ENCODE measurements at regions of chr19 and their contacts with region 1.

Region 1: GRCh38 chr19:48954595-48955310 is at the start of gene BAX:
- DNase-seq: peak; percentile 99
- H3K4me3 ChIP-seq: peak within 1 kb of the TSS; percentile 68 to 85 (median 82)
- H3K27ac ChIP-seq: peak within 1 kb of the TSS; percentile 83 to 90 (median 85)
- H3K4me1 ChIP-seq: peaks cover 0 to 18% (median 15%) of the 10 kb centered on the region in 4 donors
- H3K27me3 ChIP-seq: no peaks in the 10 kb centered on the region
- CTCF ChIP-seq: no peak
- EP300 ChIP-seq: peak in 1 of 4 donors; percentile 81
- POLR2A ChIP-seq: peak in 1 of 2 donors; percentile 21
- total RNA-seq, gene BAX: 17.9 to 61.5 (median 30.9) TPM

Region 2: DNA sequence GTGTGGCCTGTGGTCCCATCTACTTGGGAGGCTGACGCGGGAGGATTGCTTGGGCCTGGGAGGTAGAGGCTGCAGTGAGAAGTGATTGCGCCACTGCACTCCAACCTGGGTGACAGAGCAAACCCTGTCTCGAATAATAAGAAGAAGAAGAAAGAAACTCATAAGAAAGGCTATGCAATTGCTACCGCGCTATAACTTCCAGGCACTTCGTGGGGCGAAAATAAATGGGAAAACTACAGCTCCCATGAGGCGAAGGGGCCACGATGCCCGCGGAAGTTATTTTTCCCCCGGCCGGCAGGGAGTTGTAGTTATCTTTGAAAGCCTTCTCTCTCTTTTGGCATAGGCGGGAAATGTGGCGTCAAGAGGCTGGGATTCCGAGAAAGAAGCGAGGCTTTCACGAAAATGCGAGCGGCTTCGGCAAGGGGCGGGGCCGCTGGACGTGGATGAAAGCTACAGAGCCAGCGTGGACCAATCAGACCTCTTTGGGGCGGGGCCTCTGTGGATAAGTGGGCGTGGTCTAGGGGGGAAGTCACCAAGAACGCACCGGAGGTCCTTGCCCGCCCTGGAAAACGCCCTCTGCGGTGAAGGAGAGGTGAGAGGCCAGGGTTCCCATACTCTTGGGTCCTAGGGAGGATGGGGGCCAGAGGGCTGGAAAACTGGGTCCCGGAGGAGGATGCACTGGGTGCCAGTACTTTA is 54.8 kb before region 1 on chr19 and contains the start of gene NUCB1:
- intact Hi-C with region 1: loop called (anchors 5 kb)
- DNase-seq: peak; percentile 100
- H3K4me3 ChIP-seq: peak within 1 kb of the TSS; percentile 73 to 92 (median 84)
- H3K27ac ChIP-seq: peak within 1 kb of the TSS; percentile 88 to 91 (median 89)
- H3K4me1 ChIP-seq: peaks cover 0 to 49% (median 44%) of the 10 kb centered on the region in 4 donors
- H3K27me3 ChIP-seq: no peaks in the 10 kb centered on the region
- CTCF ChIP-seq: peak in 1 of 4 experiments; percentile 30
- EP300 ChIP-seq: peak in 2 of 4 donors; percentile 60 to 87
- POLR2A ChIP-seq: peak; percentile 37 to 66
- total RNA-seq, gene NUCB1: 153 to 275 (median 176) TPM

Region 3: DNA sequence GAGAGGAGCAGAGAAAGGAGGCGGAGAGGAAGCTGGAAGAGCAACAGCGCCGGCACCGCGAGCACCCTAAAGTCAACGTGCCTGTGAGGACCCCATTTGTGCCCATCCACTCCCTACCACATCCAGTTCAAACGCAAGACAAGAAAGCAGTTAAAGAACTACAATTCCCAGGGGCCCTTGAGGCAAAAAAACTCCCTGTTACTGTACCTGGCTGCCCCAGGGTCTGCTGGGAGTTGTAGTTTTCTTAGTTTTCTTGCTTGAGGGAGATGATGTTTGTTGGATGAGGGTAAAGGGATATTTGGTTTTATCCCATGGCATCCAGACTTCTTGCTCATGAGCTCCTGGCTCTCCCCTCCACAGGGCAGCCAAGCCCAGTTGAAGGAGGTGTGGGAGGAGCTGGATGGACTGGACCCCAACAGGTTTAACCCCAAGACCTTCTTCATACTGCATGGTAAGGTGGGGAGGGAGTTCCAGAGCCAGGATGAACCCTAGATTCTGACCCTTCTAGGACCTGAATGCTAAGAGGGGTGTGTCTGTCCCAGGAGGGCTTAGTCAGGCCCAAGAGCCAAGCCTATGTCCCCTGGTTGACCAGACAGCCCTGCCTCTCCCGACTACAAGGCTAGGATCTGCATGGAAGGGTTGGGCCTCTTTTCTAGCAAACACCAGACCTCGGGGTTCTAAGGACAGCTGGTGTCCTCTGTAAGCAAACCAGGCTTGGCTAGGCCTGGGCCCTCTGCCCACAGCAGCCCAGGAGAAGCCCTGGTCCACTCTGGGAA is 41.5 kb before region 1 on chr19:
- intact Hi-C with region 1: loop called (anchors 5 kb)
- DNase-seq: no peak
- H3K4me3 ChIP-seq: no peak overlapping the region
- H3K27ac ChIP-seq: no peak overlapping the region
- H3K4me1 ChIP-seq: no peaks in the 10 kb centered on the region
- H3K27me3 ChIP-seq: no peaks in the 10 kb centered on the region
- CTCF ChIP-seq: no peak
- EP300 ChIP-seq: no peak
- POLR2A ChIP-seq: no peak

Region 4: GRCh38 chr19:48926909-48927308 is 27.8 kb before region 1 on chr19:
- intact Hi-C with region 1: no loop called
- DNase-seq: peak; percentile 82
- H3K4me3 ChIP-seq: no peak overlapping the region
- H3K27ac ChIP-seq: peak overlapping the region in 2 of 4 donors; percentile 11 to 49
- H3K4me1 ChIP-seq: peaks cover 0 to 11% (median 3%) of the 10 kb centered on the region in 4 donors
- H3K27me3 ChIP-seq: peaks cover 0 to 3% (median 0%) of the 10 kb centered on the region in 3 donors
- CTCF ChIP-seq: no peak
- EP300 ChIP-seq: peak in 1 of 4 donors; percentile 42
- POLR2A ChIP-seq: no peak

Region 5: DNA sequence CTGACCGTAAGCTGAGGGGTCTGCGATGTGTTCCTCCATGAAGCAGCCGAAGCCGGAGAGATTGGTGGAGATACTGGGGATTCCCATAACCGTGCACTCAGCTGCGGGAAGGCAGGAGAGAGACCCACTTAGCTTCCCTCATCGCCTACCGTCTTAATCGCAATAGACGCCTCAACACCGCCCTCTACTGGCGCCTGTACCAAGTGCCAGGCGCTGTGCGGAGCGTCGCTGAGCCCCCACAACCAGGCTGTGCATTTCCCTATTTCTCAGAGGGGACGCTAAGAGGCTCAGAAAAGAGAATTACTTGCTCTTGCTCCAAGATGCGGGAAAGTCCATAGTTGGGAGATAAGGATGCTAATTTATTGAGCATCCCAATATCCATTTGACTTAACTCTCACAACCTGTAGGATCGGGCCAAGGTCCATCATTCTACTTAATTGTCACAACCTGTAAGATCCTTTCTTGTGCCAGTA is 16.2 kb after region 1 on chr19:
- intact Hi-C with region 1: no loop called
- DNase-seq: peak; percentile 86
- H3K4me3 ChIP-seq: no peak overlapping the region
- H3K27ac ChIP-seq: peak overlapping the region in 2 of 4 donors; percentile 30 to 35
- H3K4me1 ChIP-seq: peaks cover 0 to 29% (median 24%) of the 10 kb centered on the region in 4 donors
- H3K27me3 ChIP-seq: no peaks in the 10 kb centered on the region
- CTCF ChIP-seq: peak; percentile 85 to 96 (median 88)
- EP300 ChIP-seq: no peak
- POLR2A ChIP-seq: no peak

Measured in sigmoid colon (tissue), 7 donors.